A673 (cell line): ENCODE measurements at regions of chr1 and their contacts with region 1.

Region 1: GRCh38 chr1:23916209-23917131 is 3.3 kb upstream of the CNR2 start:
- DNase-seq: peak; percentile 86
- H3K4me3 ChIP-seq: no peak overlapping the region
- H3K27ac ChIP-seq: no peak overlapping the region
- H3K4me1 ChIP-seq: no peaks in the 10 kb centered on the region
- H3K27me3 ChIP-seq: no peaks in the 10 kb centered on the region
- CTCF ChIP-seq: peak; percentile 75

Region 2: GRCh38 chr1:23484253-23485001 is 432.0 kb before region 1 on chr1:
- CTCF ChIA-PET with region 1: interaction called, 12 read pairs
- POLR2A ChIA-PET with region 1: no interaction called
- intact Hi-C with region 1: no loop called
- DNase-seq: peak; percentile 94
- H3K4me3 ChIP-seq: peak overlapping the region; percentile 68
- H3K27ac ChIP-seq: peak overlapping the region; percentile 65
- H3K4me1 ChIP-seq: peaks cover 6% of the 10 kb centered on the region
- H3K27me3 ChIP-seq: no peaks in the 10 kb centered on the region
- CTCF ChIP-seq: no peak

Region 3: GRCh38 chr1:23772049-23772853 is 144.2 kb before region 1 on chr1:
- CTCF ChIA-PET with region 1: interaction called, 29 read pairs
- POLR2A ChIA-PET with region 1: no interaction called
- intact Hi-C with region 1: loop called (anchors 2 kb)
- DNase-seq: peak; percentile 88
- H3K4me3 ChIP-seq: no peak overlapping the region
- H3K27ac ChIP-seq: no peak overlapping the region
- H3K4me1 ChIP-seq: no peaks in the 10 kb centered on the region
- H3K27me3 ChIP-seq: no peaks in the 10 kb centered on the region
- CTCF ChIP-seq: peak; percentile 96